A549 (cell line): ENCODE measurements at regions of chr5 and their contacts with region 1.

Region 1: GRCh38 chr5:96868603-96869371 is 7.5 kb upstream of the ERAP2 start:
- DNase-seq: peak; percentile 54 to 76
- ATAC-seq: peak; percentile 95 to 98
- H3K4me3 ChIP-seq: no peak overlapping the region
- H3K27ac ChIP-seq: no peak overlapping the region
- H3K4me1 ChIP-seq: no peaks in the 10 kb centered on the region
- CTCF ChIP-seq: peak; percentile 87
- EP300 ChIP-seq: no peak
- POLR2A ChIP-seq: no peak
- RAD21 ChIP-seq: peak; percentile 84 to 92

Region 2: DNA sequence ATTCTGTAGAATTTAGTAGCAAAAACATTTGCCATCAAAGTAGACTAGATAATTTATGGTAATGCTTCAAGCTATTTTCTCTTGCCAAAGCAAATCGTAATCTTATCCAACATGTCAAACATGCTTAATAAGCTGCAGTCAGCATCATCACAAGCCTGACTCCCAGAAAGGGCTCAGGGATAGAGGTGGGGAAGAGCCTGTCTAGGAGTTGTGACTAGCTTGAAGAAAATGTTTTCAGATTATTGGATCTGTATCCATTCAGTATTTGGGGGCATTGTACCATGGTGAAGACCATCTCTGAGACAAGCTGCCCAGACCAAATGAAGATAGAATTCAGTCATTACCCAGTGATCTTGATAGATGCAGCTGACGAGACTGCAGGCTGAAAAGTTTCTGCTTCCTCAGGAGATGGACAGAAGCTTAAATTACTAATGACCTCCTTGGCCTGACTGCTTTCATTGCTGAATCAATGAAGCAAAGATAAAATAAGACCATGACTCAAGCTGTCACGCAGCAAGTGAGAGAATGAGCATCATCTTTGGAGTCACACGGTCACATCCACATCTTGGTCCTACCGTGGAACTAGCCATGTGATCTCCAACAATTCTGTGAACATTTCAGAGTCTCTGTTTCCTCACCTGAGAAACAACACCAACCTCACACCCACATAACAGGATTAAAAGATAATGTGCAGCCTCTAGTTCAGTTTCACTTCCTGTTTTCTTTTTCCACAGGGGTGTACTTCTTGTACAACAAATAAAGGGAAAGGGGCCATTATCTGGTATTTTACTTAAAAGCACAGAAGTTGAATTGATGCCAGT is 16.9 kb after region 1 on chr5:
- CTCF ChIA-PET with region 1: interaction called, 11 read pairs
- POLR2A ChIA-PET with region 1: no interaction called
- DNase-seq: no peak
- ATAC-seq: no peak
- H3K4me3 ChIP-seq: no peak overlapping the region
- H3K27ac ChIP-seq: no peak overlapping the region
- H3K4me1 ChIP-seq: peaks cover 7% of the 10 kb centered on the region; the same call in 1 of the 3 replicates
- CTCF ChIP-seq: no peak
- EP300 ChIP-seq: no peak
- POLR2A ChIP-seq: no peak
- RAD21 ChIP-seq: no peak

Region 3: DNA sequence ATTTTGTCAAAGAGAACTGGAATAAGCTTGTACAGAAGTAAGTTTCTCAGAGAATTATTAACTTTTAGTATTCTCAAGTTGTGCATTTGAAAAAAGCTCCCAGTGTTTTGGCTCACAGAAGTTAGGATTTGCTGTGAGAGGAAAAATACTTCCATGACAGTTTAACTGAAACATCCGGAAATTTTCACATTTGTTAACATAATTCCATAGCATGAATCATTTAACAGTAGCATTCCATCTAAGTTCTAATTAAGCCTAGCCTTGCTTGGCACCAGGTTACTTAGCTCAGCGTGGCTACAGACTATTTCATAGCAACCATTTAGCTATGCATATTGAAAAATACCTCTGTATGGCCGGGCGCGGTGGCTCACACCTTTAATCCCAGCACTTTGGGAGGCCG is 157.9 kb after region 1 on chr5:
- CTCF ChIA-PET with region 1: no interaction called
- POLR2A ChIA-PET with region 1: no interaction called
- DNase-seq: no peak
- ATAC-seq: no peak
- H3K4me3 ChIP-seq: no peak overlapping the region
- H3K27ac ChIP-seq: no peak overlapping the region
- H3K4me1 ChIP-seq: no peaks in the 10 kb centered on the region
- CTCF ChIP-seq: no peak
- EP300 ChIP-seq: no peak
- POLR2A ChIP-seq: no peak
- RAD21 ChIP-seq: no peak

Region 4: GRCh38 chr5:97142521-97143254 is 273.9 kb after region 1 on chr5 and contains the start of gene LIX1:
- CTCF ChIA-PET with region 1: interaction called, 24 read pairs
- POLR2A ChIA-PET with region 1: no interaction called
- DNase-seq: peak; percentile 29 to 39
- ATAC-seq: peak; percentile 94 to 96
- H3K4me3 ChIP-seq: no peak within 1 kb of the TSS
- H3K27ac ChIP-seq: no peak within 1 kb of the TSS
- H3K4me1 ChIP-seq: no peaks in the 10 kb centered on the region
- CTCF ChIP-seq: peak; percentile 62
- EP300 ChIP-seq: no peak
- POLR2A ChIP-seq: no peak
- RAD21 ChIP-seq: peak; percentile 78 to 79
- polyA plus RNA-seq, gene LIX1: not detected in 2 replicates